ENCODE measurements at regions of chr5 and their contacts with region 1.

Region 1: DNA sequence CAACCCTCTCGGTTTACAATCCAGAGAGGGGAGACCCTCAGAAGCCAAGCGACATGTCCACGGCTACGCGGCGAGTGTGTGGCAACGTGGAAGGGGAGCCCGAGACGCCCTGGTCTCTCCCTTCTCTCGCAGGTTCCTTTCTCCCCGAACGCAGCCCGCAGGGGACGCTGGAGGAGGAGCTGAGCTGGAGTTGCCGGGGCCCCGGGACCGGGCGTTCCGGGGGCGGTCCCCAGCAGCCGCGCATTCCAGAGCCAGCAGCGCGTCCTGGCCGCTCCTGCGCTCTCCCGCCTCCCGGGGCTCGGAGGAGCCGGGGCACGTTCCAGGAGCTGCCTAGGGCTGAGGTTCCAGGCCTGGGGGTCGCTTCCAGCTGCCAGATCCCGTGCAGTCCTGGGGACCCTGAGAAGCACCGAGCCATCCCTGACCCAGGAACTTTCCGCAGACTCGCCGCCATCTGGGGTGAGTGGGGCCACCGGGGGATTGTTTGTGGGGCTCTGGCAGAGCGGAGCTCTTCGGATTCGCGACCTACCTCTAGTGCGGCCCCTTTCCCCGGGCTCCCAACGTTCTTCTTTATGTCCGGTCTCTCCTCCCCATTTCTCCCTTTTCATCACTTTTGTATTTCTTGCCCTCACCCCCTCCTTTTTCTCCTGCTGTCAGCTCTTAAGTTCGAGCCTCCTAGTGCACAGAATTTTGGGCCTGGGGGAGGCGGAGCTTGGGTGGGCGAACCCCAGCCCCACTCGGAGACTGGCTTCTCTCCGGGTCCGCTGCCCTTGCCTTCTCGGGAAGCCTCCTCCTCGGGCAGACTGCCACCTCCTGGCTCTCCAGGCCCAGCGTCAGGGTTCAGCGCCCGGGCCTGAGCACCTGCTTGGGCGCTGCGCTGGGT is at the start of gene SMIM3:
- DNase-seq: peak; percentile 87
- ATAC-seq: peak; percentile 60
- H3K4me3 Mint-ChIP-seq: peak within 1 kb of the TSS; percentile 99
- H3K27ac Mint-ChIP-seq: peak within 1 kb of the TSS; percentile 96
- H3K4me1 Mint-ChIP-seq: peaks cover 49% of the 10 kb centered on the region
- H3K27me3 Mint-ChIP-seq: peaks cover 3% of the 10 kb centered on the region
- total RNA-seq, gene SMIM3: 16.8 to 16.9 TPM

Region 2: DNA sequence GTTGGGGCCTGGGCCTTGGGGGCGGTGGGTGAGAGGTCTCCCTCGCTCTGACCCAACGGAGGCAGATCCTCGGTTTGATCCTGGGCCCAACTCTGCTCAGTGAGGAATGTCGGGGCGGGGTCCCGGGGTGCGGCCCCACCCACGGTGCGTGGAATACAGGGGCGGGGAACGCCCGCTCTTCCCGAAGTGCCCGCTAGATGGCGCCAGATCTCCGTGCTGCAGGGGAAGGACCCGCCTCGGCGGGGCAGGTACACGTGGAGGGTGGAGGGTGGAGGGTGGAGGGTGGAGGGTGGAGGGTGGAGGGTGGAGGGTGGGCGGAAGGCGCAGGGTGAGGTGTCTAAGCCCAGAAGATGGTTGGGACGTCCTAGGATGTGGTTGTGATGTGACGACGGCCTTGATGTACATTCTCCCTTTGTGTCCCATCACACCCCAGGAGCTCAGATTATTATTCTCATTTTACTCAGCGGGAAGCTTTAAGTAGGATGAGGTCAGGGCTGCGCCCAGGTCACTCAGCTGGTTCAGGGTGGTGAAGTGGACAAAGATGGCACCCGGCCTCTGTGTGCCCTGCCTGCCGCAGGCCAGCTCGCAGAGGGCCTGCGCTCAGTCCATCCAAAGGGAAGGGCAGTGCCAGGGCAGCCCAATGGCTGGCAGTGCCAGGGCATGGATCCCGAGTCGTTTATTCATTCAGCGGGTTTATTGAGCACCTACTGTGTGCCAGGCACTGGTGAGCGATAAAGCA is 319.8 kb before region 1 on chr5:
- CTCF ChIA-PET with region 1: interaction called, 8 read pairs
- POLR2A ChIA-PET with region 1: no interaction called
- intact Hi-C with region 1: loop called in 1 of 2 experiments (anchors 1 kb)
- DNase-seq: peak; percentile 93
- ATAC-seq: peak; percentile 87
- H3K4me3 Mint-ChIP-seq: peak overlapping the region; percentile 49
- H3K27ac Mint-ChIP-seq: peak overlapping the region; percentile 52
- H3K4me1 Mint-ChIP-seq: peaks cover 28% of the 10 kb centered on the region
- H3K27me3 Mint-ChIP-seq: no peaks in the 10 kb centered on the region

Region 3: GRCh38 chr5:150540615-150541396 is 238.0 kb before region 1 on chr5:
- CTCF ChIA-PET with region 1: no interaction called
- POLR2A ChIA-PET with region 1: no interaction called
- intact Hi-C with region 1: no loop called
- DNase-seq: no peak
- ATAC-seq: no peak
- H3K4me3 Mint-ChIP-seq: no peak overlapping the region
- H3K27ac Mint-ChIP-seq: no peak overlapping the region
- H3K4me1 Mint-ChIP-seq: no peaks in the 10 kb centered on the region
- H3K27me3 Mint-ChIP-seq: no peaks in the 10 kb centered on the region

Region 4: DNA sequence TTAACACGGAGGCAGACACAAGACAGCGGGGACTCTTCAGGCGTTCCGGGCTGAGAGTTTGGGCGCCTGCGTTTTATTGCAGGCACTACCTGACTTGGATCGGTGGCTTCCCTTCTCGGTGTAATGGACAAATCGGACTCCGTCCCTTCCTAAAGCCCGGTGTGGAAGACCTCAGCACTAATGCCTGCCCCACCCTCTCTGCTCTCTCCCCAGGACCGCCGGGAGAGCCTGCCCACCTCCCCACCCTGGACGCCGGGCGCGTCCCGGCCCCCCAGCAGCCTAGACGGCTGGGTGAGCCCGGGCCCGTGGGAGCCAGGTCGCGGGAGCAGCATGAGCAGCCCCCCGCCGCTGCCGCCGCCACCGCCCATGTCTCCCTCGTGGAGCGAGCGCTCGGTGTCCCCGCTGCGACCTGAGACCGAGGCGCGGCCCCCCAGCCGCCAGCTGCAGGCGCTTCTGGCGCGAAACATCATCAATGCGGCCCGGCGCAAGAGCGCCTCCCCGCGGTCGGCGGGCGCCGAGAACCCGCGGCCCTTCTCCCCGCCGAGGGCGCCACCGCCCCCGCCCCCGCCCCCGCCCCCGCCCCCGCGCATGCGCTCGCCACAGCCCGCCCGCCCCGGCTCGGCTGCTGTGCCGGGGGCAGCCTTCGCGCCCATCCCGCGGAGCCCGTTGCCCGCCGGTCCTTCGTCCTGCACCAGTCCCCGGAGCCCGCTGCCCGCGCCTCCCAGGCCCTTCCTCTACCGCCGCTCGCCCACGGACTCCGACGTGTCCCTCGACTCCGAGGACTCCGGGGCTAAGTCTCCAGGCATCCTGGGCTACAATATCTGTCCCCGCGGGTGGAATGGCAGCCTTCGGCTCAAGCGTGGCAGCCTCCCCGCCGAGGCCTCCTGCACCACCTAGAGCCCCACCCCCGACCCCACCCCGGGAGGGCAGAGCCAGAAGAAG is 122.3 kb before region 1 on chr5:
- CTCF ChIA-PET with region 1: no interaction called
- POLR2A ChIA-PET with region 1: no interaction called
- intact Hi-C with region 1: loop called in 1 of 2 experiments (anchors 1 kb)
- DNase-seq: peak; percentile 82
- ATAC-seq: peak; percentile 82
- H3K4me3 Mint-ChIP-seq: peak overlapping the region; percentile 63
- H3K27ac Mint-ChIP-seq: no peak overlapping the region
- H3K4me1 Mint-ChIP-seq: no peaks in the 10 kb centered on the region
- H3K27me3 Mint-ChIP-seq: no peaks in the 10 kb centered on the region

Region 5: GRCh38 chr5:150789943-150790611 is 11.3 kb after region 1 on chr5:
- CTCF ChIA-PET with region 1: interaction called, 36 read pairs
- POLR2A ChIA-PET with region 1: interaction called, 3 read pairs
- intact Hi-C with region 1: loop called in 1 of 2 experiments (anchors 1 kb)
- DNase-seq: peak; percentile 88
- ATAC-seq: peak; percentile 98
- H3K4me3 Mint-ChIP-seq: peak overlapping the region; percentile 56
- H3K27ac Mint-ChIP-seq: peak overlapping the region; percentile 88
- H3K4me1 Mint-ChIP-seq: peaks cover 65% of the 10 kb centered on the region
- H3K27me3 Mint-ChIP-seq: no peaks in the 10 kb centered on the region

Region 6: DNA sequence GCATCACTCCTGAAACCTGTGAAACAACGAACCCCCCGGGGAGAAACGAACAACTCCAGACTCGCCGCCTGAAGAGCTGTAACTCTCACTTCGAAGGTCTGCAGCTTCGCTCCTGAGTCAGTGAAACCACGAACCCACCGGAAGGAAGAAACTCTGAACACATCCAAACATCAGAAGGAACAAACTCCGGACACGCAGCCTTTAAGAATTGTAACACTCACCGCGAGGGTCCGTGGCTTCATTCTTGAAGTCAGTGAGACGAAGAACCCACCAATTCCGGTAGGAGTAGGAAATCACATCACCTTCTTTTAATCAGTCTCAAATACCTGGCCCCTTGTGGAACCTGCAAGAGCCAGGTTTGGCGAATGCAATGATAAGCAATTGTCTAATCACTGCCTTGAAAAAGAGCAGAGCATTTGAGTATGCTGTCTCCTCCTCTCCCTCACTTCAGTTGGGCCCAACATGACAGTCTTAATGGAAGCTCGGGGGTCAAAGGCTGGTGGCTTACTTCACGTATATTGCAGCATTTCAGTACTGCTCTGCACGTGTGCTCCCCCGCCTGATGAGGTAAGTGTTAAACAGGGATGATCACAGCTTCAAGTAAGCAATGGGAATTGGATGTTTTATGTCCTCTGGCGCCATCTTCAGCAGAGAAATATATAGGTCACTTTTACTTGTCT is 68.0 kb after region 1 on chr5:
- CTCF ChIA-PET with region 1: interaction called, 44 read pairs
- POLR2A ChIA-PET with region 1: interaction called, 8 read pairs
- intact Hi-C with region 1: loop called (anchors 2 to 5 kb)
- DNase-seq: peak; percentile 82
- ATAC-seq: peak; percentile 94
- H3K4me3 Mint-ChIP-seq: peak overlapping the region; percentile 67
- H3K27ac Mint-ChIP-seq: peak overlapping the region; percentile 93
- H3K4me1 Mint-ChIP-seq: peaks cover 22% of the 10 kb centered on the region
- H3K27me3 Mint-ChIP-seq: no peaks in the 10 kb centered on the region

Region 7: GRCh38 chr5:150945947-150946346 is 167.2 kb after region 1 on chr5:
- CTCF ChIA-PET with region 1: no interaction called
- POLR2A ChIA-PET with region 1: no interaction called
- intact Hi-C with region 1: no loop called
- DNase-seq: no peak
- ATAC-seq: no peak
- H3K4me3 Mint-ChIP-seq: no peak overlapping the region
- H3K27ac Mint-ChIP-seq: no peak overlapping the region
- H3K4me1 Mint-ChIP-seq: no peaks in the 10 kb centered on the region
- H3K27me3 Mint-ChIP-seq: peaks cover 27% of the 10 kb centered on the region

Measured in activated CD4-positive, alpha-beta T cell treated with anti-CD3 and anti-CD28 coated beads for 36 hours (primary cell).